Posterior vena cava (tissue), 2 donors: ENCODE measurements at regions of chr12 and their contacts with region 1.

Region 1: GRCh38 chr12:126369487-126370463 is 1304.5 kb downstream of the AACS start:
- DNase-seq: no peak

Region 2: GRCh38 chr12:126347421-126347820 is 22.4 kb before region 1 on chr12:
- intact Hi-C with region 1: no loop called
- DNase-seq: no peak

Region 3: DNA sequence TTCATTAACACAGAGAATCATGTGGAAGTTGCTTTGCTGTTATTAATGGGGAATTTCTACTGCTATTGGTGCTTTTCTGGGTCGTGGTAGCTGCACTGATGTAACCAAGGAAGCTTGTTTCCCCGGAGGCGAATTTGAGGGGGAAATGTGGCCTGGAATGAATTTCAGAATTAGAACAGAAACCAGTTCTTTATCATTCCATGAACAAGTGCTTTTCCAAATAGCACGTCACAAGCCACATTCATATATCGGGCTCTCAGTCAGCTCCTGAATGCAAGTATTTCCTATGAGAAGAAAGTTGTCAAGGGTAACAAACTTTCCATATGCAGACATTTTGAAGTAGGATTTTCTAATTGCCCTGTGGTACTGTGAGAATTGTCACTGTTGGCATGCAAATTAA is 48.6 kb after region 1 on chr12:
- intact Hi-C with region 1: no loop called
- DNase-seq: no peak

Region 4: DNA sequence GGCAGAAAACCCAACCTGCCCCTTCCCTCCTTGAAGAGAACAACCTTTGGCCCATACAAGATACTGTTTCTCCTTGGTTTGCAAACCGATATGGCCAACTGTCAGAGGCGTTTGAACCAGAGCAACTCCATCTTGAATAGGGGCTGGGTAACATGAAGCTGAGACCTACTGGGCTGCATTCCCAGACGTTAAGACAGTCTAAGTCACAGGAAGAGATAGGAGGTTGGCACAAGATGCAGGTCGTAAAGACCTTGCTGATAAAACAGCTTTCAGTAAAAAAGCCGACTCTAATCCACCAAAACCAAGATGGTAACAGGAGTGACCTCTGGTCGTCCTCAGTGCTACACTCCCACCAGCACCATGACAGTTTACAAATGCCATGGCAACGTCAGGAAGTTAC is 1854.5 kb after region 1 on chr12:
- intact Hi-C with region 1: loop called in 1 of 2 experiments (anchors 5 kb)
- DNase-seq: no peak